ENCODE measurements at regions of chr18 and their contacts with region 1.

Region 1: GRCh38 chr18:51051105-51051712 is 21.2 kb downstream of the SMAD4 start:
- DNase-seq: peak; percentile 67
- ATAC-seq: peak; percentile 67
- H3K4me3 ChIP-seq: no peak overlapping the region
- H3K4me3 Mint-ChIP-seq: no peak overlapping the region
- H3K27ac ChIP-seq: no peak overlapping the region
- H3K27ac Mint-ChIP-seq: peak overlapping the region; percentile 67
- H3K4me1 ChIP-seq: peaks cover 0 to 7% of the 10 kb centered on the region in 2 donors
- H3K4me1 Mint-ChIP-seq: peaks cover 21% of the 10 kb centered on the region
- H3K27me3 ChIP-seq: no peaks in the 10 kb centered on the region
- H3K27me3 Mint-ChIP-seq: no peaks in the 10 kb centered on the region
- CTCF ChIP-seq: peak; percentile 85

Region 2: DNA sequence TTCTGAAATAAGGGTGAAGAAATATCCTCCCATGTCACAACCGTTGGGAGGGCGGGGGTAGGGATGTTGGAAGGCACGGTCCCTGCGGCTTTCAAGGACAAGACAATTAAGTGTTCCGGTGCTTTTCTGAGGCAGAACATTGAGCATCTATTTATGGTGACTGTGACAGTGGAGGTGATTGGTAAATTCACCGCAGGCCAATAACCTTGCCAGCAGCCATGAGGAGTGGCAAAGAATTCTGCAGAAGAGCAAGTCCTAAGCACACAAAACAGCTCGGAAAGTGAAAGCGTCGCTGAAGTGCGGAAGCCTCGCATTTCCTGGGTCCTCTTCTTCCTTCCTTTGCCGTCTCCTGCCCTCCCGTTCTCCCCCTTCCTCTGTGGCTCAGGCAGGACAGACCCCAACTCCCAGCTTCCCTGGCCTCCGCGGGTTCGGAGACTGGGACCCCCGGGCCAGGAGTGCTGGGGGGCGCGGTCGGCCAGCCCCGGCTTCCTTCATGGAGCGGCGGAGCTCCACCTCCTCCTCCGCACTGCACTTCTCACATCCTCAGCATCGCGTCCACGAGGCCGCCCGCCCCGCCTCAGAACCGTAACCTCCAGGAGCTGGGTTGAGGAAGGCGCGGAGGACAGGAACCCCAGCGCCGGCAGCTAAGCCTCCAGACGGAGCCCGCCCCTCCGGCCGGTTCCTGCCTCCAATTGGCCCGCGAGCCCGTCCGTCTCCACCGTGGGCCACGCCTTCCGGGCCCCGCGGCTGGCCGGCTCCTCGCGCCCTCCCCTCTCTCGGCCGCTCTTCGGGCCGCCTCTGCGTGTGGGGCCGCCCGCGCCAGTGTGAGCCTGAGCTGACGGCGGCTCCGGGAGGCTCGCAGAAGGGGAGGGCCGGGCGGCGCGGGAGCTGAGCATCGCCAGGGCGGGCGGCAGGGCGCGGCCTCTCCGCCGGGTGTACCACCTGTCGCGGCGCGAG is 172.6 kb before region 1 on chr18 and contains the start of gene ME2:
- CTCF ChIA-PET with region 1: interaction called, 4 read pairs
- POLR2A ChIA-PET with region 1: no interaction called
- intact Hi-C with region 1: loop called (anchors 5 kb)
- DNase-seq: peak; percentile 94
- ATAC-seq: peak; percentile 93
- H3K4me3 ChIP-seq: peak within 1 kb of the TSS; percentile 80 to 95 (median 90)
- H3K4me3 Mint-ChIP-seq: peak within 1 kb of the TSS; percentile 98
- H3K27ac ChIP-seq: peak within 1 kb of the TSS; percentile 96 to 98
- H3K27ac Mint-ChIP-seq: peak within 1 kb of the TSS; percentile 99
- H3K4me1 ChIP-seq: peaks cover 20 to 25% of the 10 kb centered on the region in 2 donors
- H3K4me1 Mint-ChIP-seq: peaks cover 30% of the 10 kb centered on the region
- H3K27me3 ChIP-seq: no peaks in the 10 kb centered on the region
- H3K27me3 Mint-ChIP-seq: peaks cover 3% of the 10 kb centered on the region
- CTCF ChIP-seq: no peak
- total RNA-seq, gene ME2: 55.4 and 57.8 TPM in 2 replicates

Region 3: DNA sequence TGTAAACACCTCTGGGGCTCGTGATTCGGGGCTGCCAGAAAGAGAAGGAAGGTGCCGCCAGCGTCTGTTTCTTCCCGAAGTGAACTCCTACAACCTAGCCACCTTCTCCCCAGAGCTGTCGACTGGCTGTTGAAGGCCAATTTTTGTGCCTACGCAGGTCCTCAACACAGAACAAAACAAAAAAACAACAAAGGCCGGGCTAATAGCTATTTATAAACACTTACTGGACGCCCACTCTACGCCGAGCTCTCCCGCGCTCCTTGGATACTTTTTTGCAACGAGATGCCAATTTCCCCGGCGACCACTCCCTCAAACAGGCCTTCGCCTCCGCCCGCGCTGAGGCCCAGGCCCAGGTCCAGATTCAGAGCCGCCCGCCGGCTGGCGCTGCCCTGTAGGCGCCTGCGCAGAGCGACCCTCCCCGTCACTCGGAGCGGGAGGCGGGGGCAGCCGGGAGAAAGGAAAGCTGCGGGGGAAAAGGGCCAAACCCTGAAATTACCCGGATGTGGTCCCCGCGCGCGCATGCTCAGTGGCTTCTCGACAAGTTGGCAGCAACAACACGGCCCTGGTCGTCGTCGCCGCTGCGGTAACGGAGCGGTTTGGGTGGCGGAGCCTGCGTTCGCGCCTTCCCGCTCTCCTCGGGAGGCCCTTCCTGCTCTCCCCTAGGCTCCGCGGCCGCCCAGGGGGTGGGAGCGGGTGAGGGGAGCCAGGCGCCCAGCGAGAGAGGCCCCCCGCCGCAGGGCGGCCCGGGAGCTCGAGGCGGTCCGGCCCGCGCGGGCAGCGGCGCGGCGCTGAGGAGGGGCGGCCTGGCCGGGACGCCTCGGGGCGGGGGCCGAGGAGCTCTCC is 21.3 kb before region 1 on chr18 and contains the start of gene SMAD4:
- CTCF ChIA-PET with region 1: interaction called, 16 read pairs
- POLR2A ChIA-PET with region 1: interaction called, 3 read pairs
- intact Hi-C with region 1: loop called (anchors 1 kb)
- DNase-seq: peak; percentile 97
- ATAC-seq: peak; percentile 83
- H3K4me3 ChIP-seq: peak within 1 kb of the TSS; percentile 61 to 81 (median 74)
- H3K4me3 Mint-ChIP-seq: peak within 1 kb of the TSS; percentile 97
- H3K27ac ChIP-seq: peak within 1 kb of the TSS; percentile 78 to 84
- H3K27ac Mint-ChIP-seq: peak within 1 kb of the TSS; percentile 99
- H3K4me1 ChIP-seq: peaks cover 22 to 42% of the 10 kb centered on the region in 2 donors
- H3K4me1 Mint-ChIP-seq: peaks cover 53% of the 10 kb centered on the region
- H3K27me3 ChIP-seq: no peaks in the 10 kb centered on the region
- H3K27me3 Mint-ChIP-seq: no peaks in the 10 kb centered on the region
- CTCF ChIP-seq: no peak
- total RNA-seq, gene SMAD4: 136 and 146 TPM in 2 replicates

Region 4: DNA sequence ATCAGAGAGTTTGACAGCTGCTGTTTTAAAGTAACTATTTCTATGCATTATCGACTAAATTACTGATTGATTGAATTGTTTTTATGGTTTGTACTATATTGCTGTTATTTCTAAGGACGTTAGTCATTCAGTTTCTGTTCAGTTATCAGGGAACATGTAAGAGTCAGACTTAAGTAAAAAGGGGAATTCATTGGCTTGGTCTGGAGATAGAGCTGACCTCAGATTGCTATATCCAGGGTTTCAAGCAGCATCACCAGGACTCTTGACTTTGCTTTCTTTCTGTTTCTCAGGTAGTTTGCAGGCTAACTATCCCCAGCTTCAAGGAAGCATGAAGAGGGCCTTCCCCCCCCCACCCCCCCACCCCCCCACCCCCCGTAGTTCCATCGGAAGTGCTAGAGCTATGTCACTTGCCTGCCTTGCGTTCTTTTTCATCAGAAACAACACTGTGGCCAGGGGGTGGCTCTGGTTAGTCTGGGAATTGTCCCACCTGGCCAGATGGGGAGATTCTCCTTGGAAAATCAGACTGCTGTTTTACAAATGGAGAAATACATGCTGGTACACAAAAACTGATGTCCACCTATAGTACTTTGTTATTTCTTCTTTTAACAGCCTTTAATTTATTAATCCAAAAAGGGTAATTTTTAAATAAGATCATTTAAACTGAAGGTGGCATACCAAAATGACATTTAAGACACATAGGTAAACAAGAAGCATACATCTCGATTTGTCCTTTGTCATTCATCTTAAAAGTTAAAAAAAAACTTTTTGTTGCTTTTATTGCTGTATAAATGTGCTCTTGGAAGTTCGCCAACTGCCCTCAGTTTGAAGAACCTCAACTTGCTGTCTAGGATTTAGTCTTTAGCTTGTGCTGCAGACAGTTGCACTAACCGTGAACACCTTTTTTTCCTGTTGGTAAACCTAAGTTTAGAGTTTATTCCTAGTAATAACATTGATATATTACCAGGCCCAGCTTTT is 11.8 kb before region 1 on chr18:
- CTCF ChIA-PET with region 1: interaction called, 26 read pairs
- POLR2A ChIA-PET with region 1: no interaction called
- intact Hi-C with region 1: no loop called
- DNase-seq: no peak
- ATAC-seq: no peak
- H3K4me3 ChIP-seq: no peak overlapping the region
- H3K4me3 Mint-ChIP-seq: peak overlapping the region; percentile 14
- H3K27ac ChIP-seq: no peak overlapping the region
- H3K27ac Mint-ChIP-seq: no peak overlapping the region
- H3K4me1 ChIP-seq: peaks cover 43 to 51% of the 10 kb centered on the region in 2 donors
- H3K4me1 Mint-ChIP-seq: peaks cover 79% of the 10 kb centered on the region
- H3K27me3 ChIP-seq: no peaks in the 10 kb centered on the region
- H3K27me3 Mint-ChIP-seq: no peaks in the 10 kb centered on the region
- CTCF ChIP-seq: no peak

Region 5: GRCh38 chr18:51077217-51077616 is 26.0 kb after region 1 on chr18:
- CTCF ChIA-PET with region 1: interaction called, 3 read pairs
- POLR2A ChIA-PET with region 1: no interaction called
- intact Hi-C with region 1: loop called (anchors 1 kb)
- DNase-seq: no peak
- ATAC-seq: no peak
- H3K4me3 ChIP-seq: no peak overlapping the region
- H3K4me3 Mint-ChIP-seq: no peak overlapping the region
- H3K27ac ChIP-seq: no peak overlapping the region
- H3K27ac Mint-ChIP-seq: no peak overlapping the region
- H3K4me1 ChIP-seq: peaks cover 17% of the 10 kb centered on the region in 2 donors
- H3K4me1 Mint-ChIP-seq: peaks cover 28% of the 10 kb centered on the region
- H3K27me3 ChIP-seq: no peaks in the 10 kb centered on the region
- H3K27me3 Mint-ChIP-seq: no peaks in the 10 kb centered on the region
- CTCF ChIP-seq: no peak

Measured in B cell (primary cell).